OCI-LY7 (cell line): ENCODE measurements at regions of chr3 and their contacts with region 1.

Region 1: DNA sequence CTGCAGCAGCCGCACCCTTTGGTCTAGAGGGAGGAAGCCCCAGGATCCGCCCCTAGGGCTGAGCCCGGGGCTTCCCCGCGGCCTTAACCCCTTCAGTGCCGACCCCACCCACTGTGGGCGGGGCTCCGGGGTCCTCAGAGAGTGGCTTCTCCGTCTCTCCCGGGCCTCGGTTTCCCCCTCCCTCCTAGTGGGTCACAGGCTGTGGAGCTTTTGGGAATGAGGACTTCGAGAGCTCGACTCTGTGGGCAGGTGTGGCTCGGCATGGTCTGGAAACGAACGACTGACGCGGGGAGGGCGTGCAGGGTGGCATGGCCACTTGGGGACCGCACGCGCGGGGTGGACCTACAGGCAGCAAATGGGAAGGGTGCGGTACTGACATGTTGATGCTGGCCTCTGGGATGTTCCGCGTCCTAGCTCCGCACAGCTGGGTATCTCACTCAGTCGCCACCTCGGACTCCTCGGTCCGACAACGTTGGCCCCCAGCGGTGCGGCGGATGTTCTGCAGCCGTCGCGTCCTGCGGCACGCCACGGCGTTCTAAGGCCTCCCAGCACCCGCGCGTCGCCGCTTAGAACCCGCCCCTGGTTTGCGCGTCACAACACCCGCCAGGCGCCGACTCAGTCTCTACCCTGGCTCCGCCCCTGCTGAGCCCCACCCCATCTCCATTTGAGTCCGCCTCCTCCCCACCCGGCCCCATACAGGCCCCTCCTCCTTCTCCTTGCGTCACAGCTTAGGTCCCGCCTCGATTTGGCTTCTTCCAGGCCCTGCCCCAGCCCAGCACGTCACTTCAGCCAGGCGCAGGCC is at the starts of genes HYAL3 and NAA80:
- DNase-seq: peak; percentile 99
- H3K4me3 ChIP-seq: peak within 1 kb of the TSS; percentile 78
- H3K27ac ChIP-seq: peak within 1 kb of the TSS; percentile 58
- H3K4me1 ChIP-seq: peaks cover 19% of the 10 kb centered on the region
- CTCF ChIP-seq: peak; percentile 59; the same call in 1 of the 2 replicates
- total RNA-seq, gene HYAL3: 1.2 and 2.7 TPM in 2 replicates
- total RNA-seq, gene NAA80: 13.6 and 18.7 TPM in 2 replicates

Region 2: DNA sequence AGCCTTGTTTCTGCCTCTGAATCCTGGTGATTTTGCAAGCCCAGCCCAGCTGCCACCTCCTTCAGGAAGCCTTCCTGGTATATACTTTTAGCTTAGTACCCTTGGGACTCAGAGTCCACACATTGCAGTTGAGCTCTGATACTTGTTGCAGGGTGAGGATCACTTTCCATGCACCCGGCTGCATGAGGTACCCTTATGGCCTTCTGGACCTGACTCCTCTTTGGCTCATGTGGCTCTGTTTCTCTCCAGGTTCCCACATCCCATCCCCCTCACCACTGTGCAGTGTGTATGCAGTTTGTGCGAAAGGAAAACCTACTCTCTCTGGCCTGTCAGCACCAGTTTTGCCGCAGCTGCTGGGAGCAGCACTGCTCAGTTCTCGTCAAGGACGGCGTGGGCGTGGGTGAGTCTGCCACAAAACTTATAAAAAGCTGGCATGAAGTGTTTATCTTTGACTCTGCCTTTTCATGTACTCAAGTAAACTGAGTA is 1332.1 kb before region 1 on chr3:
- CTCF ChIA-PET with region 1: no interaction called
- POLR2A ChIA-PET with region 1: no interaction called
- intact Hi-C with region 1: no loop called
- DNase-seq: no peak
- H3K4me3 ChIP-seq: no peak overlapping the region
- H3K27ac ChIP-seq: no peak overlapping the region
- H3K4me1 ChIP-seq: no peaks in the 10 kb centered on the region
- CTCF ChIP-seq: no peak

Region 3: GRCh38 chr3:50126287-50127211 is 172.5 kb before region 1 on chr3:
- CTCF ChIA-PET with region 1: no interaction called
- POLR2A ChIA-PET with region 1: no interaction called
- intact Hi-C with region 1: no loop called
- DNase-seq: no peak
- H3K4me3 ChIP-seq: no peak overlapping the region
- H3K27ac ChIP-seq: no peak overlapping the region
- H3K4me1 ChIP-seq: no peaks in the 10 kb centered on the region
- CTCF ChIP-seq: no peak

Region 4: GRCh38 chr3:50245831-50246516 is 53.1 kb before region 1 on chr3:
- CTCF ChIA-PET with region 1: no interaction called
- POLR2A ChIA-PET with region 1: no interaction called
- intact Hi-C with region 1: loop called (anchors 2 kb)
- DNase-seq: peak; percentile 89
- H3K4me3 ChIP-seq: peak overlapping the region; percentile 64
- H3K27ac ChIP-seq: peak overlapping the region; percentile 79
- H3K4me1 ChIP-seq: peaks cover 67% of the 10 kb centered on the region
- CTCF ChIP-seq: peak; percentile 97

Region 5: DNA sequence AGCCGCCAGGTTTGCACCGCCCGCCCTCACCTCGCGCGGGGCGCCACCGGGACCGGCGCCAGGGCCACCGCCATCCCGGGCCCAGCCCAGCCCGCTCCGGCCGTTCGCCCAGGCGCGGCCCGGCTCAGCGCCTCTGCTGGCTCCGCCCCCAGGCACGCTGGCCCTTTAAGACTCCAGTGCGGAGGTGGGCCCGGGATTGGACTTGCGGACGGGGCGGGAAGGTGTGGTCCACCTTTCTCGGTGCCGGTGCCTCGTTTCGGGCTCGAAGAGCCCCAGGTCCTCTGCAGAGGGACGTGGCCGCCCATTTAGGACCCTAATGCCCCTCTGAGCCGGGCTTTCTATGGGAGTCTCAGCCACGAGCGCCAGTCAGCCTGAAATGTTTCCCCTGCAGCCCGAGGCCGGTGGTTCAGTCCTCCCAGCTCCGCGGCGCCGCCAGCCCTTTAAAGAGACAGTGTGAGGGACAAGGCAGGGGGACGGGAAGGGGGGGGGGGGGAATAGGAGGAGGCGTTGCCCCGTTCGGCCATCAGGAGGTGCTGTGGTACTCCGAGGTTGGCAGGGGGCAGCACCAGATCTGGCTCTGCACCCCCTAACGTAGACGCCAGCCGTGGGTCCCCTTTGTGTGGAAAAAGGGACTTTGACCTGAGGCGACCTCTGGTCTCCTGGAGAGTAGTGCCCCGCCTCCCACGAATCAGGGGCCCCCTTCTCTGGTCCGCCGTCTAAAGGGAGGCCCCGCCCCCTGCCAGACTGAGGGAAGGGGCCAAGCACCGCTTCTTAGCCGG is 22.5 kb after region 1 on chr3:
- CTCF ChIA-PET with region 1: no interaction called
- POLR2A ChIA-PET with region 1: interaction called, 8 read pairs
- intact Hi-C with region 1: loop called (anchors 1 kb)
- DNase-seq: peak; percentile 92
- H3K4me3 ChIP-seq: peak overlapping the region; percentile 72
- H3K27ac ChIP-seq: peak overlapping the region; percentile 51
- H3K4me1 ChIP-seq: peaks cover 45% of the 10 kb centered on the region
- CTCF ChIP-seq: peak; percentile 75

Region 6: GRCh38 chr3:50337191-50337841 is 38.3 kb after region 1 on chr3:
- CTCF ChIA-PET with region 1: interaction called, 5 read pairs
- POLR2A ChIA-PET with region 1: interaction called, 13 read pairs
- intact Hi-C with region 1: loop called (anchors 5 kb)
- DNase-seq: peak; percentile 98
- H3K4me3 ChIP-seq: peak overlapping the region; percentile 90
- H3K27ac ChIP-seq: peak overlapping the region; percentile 86
- H3K4me1 ChIP-seq: peaks cover 63% of the 10 kb centered on the region
- CTCF ChIP-seq: no peak